ENCODE measurements at regions of chr1 and their contacts with region 1.

Region 1: GRCh38 chr1:166479052-166479631 is 312.3 kb upstream of the FAM78B start:
- DNase-seq: peak; percentile 61
- H3K4me3 ChIP-seq: no peak overlapping the region
- H3K27ac ChIP-seq: no peak overlapping the region
- H3K4me1 ChIP-seq: no peaks in the 10 kb centered on the region
- H3K27me3 ChIP-seq: no peaks in the 10 kb centered on the region
- CTCF ChIP-seq: peak; percentile 64 to 82 (median 69)
- EP300 ChIP-seq: no peak
- POLR2A ChIP-seq: no peak

Region 2: DNA sequence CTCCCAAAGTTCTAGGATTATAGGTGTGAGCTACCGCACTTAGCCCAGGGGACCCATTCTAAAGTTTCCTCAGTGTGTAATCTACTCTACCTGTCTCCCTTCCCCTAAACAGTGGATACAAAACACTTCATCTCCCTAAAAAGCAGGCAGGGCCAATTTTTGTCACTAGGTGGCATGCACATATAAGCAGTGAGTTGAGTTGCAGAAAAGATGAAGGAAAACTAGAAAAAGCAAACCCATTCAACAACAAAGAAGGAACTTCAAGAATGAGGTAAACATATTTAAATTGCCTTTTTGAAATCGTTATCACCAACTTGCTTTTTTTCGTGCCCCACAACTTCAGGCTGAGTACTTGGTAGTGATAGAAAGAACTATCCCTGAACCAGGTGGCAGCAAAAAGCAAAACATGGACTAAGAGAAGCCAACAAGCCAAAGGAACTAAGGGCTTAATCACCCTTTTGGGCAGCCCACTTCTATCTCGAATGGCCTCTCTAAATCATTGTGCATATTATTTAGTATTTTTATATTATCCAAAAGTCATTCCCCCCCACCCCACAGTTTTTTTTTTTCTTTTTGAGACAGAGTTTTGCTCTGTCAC is 761.1 kb before region 1 on chr1:
- in situ Hi-C with region 1: loop called in 1 of 4 experiments (anchors 25 kb)
- intact Hi-C with region 1: no loop called
- DNase-seq: peak; percentile 60
- H3K4me3 ChIP-seq: no peak overlapping the region
- H3K27ac ChIP-seq: no peak overlapping the region
- H3K4me1 ChIP-seq: no peaks in the 10 kb centered on the region
- H3K27me3 ChIP-seq: no peaks in the 10 kb centered on the region
- CTCF ChIP-seq: peak; percentile 51 to 76 (median 65)
- EP300 ChIP-seq: no peak
- POLR2A ChIP-seq: no peak

Region 3: GRCh38 chr1:165928075-165928731 is 550.9 kb before region 1 on chr1:
- in situ Hi-C with region 1: loop called in 3 of 4 experiments (anchors 10 to 25 kb)
- intact Hi-C with region 1: loop called (anchors 5 kb)
- DNase-seq: peak; percentile 31
- H3K4me3 ChIP-seq: no peak overlapping the region
- H3K27ac ChIP-seq: no peak overlapping the region
- H3K4me1 ChIP-seq: no peaks in the 10 kb centered on the region
- H3K27me3 ChIP-seq: no peaks in the 10 kb centered on the region
- CTCF ChIP-seq: peak; percentile 53 to 66 (median 58)
- EP300 ChIP-seq: no peak
- POLR2A ChIP-seq: no peak

Region 4: GRCh38 chr1:165933446-165934178 is 545.5 kb before region 1 on chr1:
- in situ Hi-C with region 1: loop called (anchors 5 to 25 kb)
- intact Hi-C with region 1: loop called (anchors 5 kb)
- DNase-seq: no peak
- H3K4me3 ChIP-seq: no peak overlapping the region
- H3K27ac ChIP-seq: no peak overlapping the region
- H3K4me1 ChIP-seq: no peaks in the 10 kb centered on the region
- H3K27me3 ChIP-seq: no peaks in the 10 kb centered on the region
- CTCF ChIP-seq: no peak
- EP300 ChIP-seq: no peak
- POLR2A ChIP-seq: no peak

Region 5: GRCh38 chr1:166570954-166571353 is 91.8 kb after region 1 on chr1:
- in situ Hi-C with region 1: no loop called
- intact Hi-C with region 1: no loop called
- DNase-seq: no peak
- H3K4me3 ChIP-seq: no peak overlapping the region
- H3K27ac ChIP-seq: no peak overlapping the region
- H3K4me1 ChIP-seq: no peaks in the 10 kb centered on the region
- H3K27me3 ChIP-seq: no peaks in the 10 kb centered on the region
- CTCF ChIP-seq: no peak
- EP300 ChIP-seq: no peak
- POLR2A ChIP-seq: no peak

Measured in transverse colon (tissue), 4 donors.